ENCODE measurements at regions of chr14 and their contacts with region 1.

Region 1: DNA sequence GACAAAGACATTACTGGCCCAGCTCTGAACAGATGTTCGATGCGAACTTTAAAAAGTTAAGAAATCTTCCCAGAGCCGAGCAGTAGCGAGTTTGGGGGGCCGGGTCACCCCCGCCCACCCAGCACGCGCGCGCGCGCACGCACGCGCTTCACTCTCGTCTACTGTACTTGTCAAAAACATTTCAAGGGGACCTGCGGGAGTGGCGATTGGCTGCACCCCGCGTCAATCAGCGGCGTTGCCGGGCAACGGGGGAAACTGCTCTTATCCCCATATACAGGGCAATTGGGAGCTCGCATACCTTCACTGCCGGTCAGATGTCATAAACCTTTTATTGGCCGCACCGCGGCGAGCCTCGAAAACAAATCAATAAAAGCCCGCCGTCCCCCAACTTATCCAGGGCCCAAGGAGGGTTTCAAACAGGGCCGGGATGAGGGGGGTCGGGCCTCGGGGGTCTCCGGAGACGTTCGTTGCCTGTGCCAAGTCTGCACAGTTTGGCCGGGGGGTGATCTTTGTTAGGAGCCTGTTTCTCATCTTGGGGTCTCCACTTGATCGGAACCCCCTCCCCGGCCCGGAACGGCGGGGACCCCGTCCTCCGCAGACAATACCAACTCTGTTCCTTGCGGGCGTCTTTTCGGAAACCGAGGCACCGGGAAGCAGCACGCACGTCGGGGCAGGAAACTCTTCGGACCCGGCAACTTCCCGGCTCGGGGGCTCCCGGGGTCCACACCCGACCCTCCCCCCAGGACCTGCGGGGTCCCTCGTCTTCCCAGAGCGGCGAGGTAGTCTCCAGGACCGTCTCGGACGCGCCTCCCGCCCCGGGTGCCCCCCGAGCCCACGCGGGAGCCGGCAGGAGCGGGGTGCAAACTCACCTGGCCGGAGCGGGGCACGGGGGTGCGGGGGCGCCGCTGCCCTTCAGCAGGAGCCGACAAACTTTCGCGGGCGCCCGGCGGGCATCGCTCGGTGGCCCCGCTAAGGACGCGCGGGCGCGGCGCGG is 734 bp downstream of the FOXN3 start:
- DNase-seq: peak; percentile 99
- H3K4me3 ChIP-seq: peak overlapping the region; percentile 80 to 92 (median 87)
- H3K27ac ChIP-seq: peak overlapping the region; percentile 47
- H3K4me1 ChIP-seq: peaks cover 6% of the 10 kb centered on the region
- H3K27me3 ChIP-seq: peaks cover 2% of the 10 kb centered on the region
- CTCF ChIP-seq: no peak

Region 2: DNA sequence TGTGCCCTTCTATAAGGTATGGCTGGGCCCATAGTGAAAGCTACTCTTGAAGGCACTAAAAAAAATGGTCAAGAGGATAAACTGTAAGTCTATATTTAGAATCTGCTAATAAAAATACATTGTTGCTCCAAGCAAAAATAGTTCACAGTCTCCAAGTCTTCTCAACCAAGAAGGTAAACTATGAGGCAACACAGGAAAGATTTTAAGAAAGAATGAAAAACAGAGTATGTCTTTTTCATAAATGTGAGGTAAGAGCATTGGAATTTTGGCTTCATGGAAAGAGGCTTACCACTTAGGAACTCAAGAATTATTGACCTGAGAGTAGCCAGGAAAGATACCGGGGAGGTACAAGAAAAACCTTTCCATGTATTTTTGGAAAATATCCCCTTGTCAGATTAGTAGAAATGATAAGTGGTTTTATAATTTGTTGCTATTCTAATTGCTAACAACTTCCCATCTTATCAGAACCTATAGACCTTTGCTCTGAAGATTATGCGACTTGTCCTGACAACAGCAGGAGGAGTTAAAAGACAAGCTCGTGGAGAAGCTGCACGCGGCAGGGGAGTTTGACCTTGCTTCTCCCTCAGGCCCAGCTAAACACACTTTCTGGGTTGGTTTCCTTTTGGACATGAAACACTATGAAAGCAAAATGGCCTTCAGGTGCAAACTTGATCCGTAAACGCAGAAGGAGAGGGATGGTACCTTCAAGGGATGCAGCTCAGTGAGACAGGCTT is 237.3 kb before region 1 on chr14:
- CTCF ChIA-PET with region 1: no interaction called
- dilution Hi-C with region 1: no loop called
- in situ Hi-C with region 1: no loop called
- intact Hi-C with region 1: loop called (anchors 10 kb)
- DNase-seq: no peak
- H3K4me3 ChIP-seq: no peak overlapping the region
- H3K27ac ChIP-seq: no peak overlapping the region
- H3K4me1 ChIP-seq: no peaks in the 10 kb centered on the region
- H3K27me3 ChIP-seq: no peaks in the 10 kb centered on the region
- CTCF ChIP-seq: no peak

Region 3: GRCh38 chr14:89455412-89455811 is 39.1 kb after region 1 on chr14:
- CTCF ChIA-PET with region 1: no interaction called
- dilution Hi-C with region 1: no loop called
- in situ Hi-C with region 1: no loop called
- intact Hi-C with region 1: no loop called
- DNase-seq: no peak
- H3K4me3 ChIP-seq: no peak overlapping the region
- H3K27ac ChIP-seq: no peak overlapping the region
- H3K4me1 ChIP-seq: no peaks in the 10 kb centered on the region
- H3K27me3 ChIP-seq: no peaks in the 10 kb centered on the region
- CTCF ChIP-seq: no peak

Region 4: GRCh38 chr14:89618811-89619551 is 202.7 kb after region 1 on chr14:
- CTCF ChIA-PET with region 1: no interaction called
- dilution Hi-C with region 1: no loop called
- in situ Hi-C with region 1: no loop called
- intact Hi-C with region 1: loop called (anchors 10 kb)
- DNase-seq: peak; percentile 41
- H3K4me3 ChIP-seq: peak overlapping the region; percentile 61 to 85 (median 70)
- H3K27ac ChIP-seq: peak overlapping the region; percentile 40
- H3K4me1 ChIP-seq: peaks cover 9% of the 10 kb centered on the region
- H3K27me3 ChIP-seq: no peaks in the 10 kb centered on the region
- CTCF ChIP-seq: no peak

Region 5: GRCh38 chr14:89767861-89768268 is 351.6 kb after region 1 on chr14:
- CTCF ChIA-PET with region 1: no interaction called
- dilution Hi-C with region 1: no loop called
- in situ Hi-C with region 1: no loop called
- intact Hi-C with region 1: loop called (anchors 10 kb)
- DNase-seq: peak; percentile 25
- H3K4me3 ChIP-seq: no peak overlapping the region
- H3K27ac ChIP-seq: no peak overlapping the region
- H3K4me1 ChIP-seq: no peaks in the 10 kb centered on the region
- H3K27me3 ChIP-seq: no peaks in the 10 kb centered on the region
- CTCF ChIP-seq: peak; percentile 37 to 74

Region 6: DNA sequence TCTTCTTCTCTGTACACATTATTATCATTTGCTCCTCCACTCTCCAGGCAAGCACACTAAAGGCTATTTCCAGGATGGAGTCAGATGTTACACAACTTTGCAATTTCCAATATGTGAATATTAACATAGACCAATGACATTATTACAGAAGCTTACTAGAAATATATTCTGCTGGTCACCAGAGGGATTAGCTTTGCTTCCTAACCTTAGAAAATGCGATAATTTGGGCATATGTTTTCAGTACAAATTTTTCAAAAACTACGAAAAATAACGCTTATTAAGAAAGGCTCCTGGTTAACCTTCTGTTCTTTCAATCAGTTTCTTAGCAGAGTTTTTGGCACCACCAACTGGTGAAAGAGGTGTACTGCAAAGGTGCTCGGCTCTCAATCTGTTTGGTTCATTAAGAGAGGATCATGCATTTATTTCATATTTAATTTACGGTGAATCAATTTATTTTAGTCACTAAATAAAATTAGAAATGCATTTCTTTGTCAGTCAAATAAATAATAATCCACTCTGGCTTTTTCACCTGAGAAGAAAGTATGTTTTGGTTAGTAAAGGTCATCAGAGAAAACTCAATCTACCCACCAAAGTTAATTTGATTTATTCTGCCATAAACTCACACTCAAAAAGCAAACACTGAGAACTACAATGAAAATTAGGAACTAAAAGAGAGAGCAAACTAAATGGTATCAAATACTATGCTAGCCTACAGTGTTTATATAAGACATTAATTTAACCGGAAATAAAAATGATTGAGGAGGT is 499.0 kb after region 1 on chr14:
- CTCF ChIA-PET with region 1: no interaction called
- dilution Hi-C with region 1: no loop called
- in situ Hi-C with region 1: loop called in 1 of 2 experiments (anchors 25 kb)
- intact Hi-C with region 1: loop called (anchors 5 kb)
- DNase-seq: peak; percentile 55
- H3K4me3 ChIP-seq: no peak overlapping the region
- H3K27ac ChIP-seq: no peak overlapping the region
- H3K4me1 ChIP-seq: peaks cover 6% of the 10 kb centered on the region
- H3K27me3 ChIP-seq: no peaks in the 10 kb centered on the region
- CTCF ChIP-seq: peak; percentile 89 to 92

Measured in mammary epithelial cell (primary cell).